ENCODE measurements at regions of chr12 and their contacts with region 1.

Region 1: DNA sequence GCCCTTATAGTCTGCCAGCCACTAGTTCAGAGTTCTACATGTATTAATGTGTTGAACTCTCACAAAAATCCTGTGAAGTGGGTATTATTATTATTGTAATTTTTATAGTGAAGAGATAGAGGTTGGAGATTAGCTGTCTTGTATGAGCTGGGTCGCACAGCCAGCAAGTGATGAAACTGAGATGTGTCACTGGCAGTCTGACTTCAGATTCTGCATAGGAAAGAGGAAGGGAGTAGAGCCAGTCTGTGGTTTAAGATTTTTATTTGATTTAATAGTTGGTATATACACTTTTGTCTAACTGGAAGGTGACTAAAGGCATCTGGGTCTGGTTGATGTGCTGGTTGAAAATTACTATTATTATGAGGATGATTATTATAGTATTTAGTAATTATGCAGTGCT is 5.8 kb upstream of the FRS2 start:
- DNase-seq: no peak
- ATAC-seq: no peak
- H3K4me3 Mint-ChIP-seq: no peak overlapping the region
- H3K27ac Mint-ChIP-seq: no peak overlapping the region
- H3K4me1 Mint-ChIP-seq: peaks cover 26% of the 10 kb centered on the region
- H3K27me3 Mint-ChIP-seq: no peaks in the 10 kb centered on the region
- CTCF ChIP-seq: no peak

Region 2: DNA sequence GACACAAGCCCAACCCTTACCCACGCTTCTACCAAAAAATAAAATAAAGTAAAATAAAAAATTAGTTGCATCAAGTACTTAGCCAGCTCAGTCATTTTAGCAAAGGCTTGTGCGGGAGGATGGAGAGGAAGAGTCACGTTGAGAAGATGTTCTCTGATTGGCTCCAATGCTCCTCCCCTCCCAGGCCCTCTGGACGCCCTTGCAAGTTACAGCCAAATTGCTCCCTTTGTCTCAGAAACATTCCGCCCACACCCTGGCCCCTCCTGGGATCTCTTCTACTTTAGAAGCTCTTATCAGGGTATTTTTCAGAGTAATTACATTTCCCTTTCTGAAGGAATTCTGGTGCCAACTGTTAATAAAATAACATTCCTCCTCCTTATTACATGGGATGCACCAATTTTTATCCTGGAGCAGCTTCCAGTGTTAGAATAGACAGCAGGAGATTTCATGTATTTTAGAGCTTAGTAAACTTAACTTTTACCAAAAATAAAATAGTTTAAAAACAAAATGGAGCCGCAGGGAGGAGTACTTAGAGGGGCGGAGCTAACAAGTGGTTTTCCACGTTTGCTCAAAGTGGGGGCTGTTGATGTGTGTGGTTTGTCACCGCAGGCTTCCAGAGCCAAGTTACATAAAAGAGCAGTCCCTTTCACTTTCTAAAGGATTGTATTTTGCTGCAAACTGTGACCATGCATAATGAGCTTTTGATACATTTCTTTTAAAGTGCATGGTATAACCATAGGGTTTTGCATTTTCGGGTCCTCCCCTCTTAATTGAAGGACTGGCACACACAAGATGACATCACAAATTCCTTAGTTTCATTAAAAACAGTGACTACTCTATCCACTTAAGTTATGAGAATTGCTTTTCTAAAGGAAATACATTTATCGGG is 925.5 kb before region 1 on chr12:
- CTCF ChIA-PET with region 1: no interaction called
- POLR2A ChIA-PET with region 1: no interaction called
- intact Hi-C with region 1: no loop called
- DNase-seq: no peak
- ATAC-seq: peak; percentile 37
- H3K4me3 Mint-ChIP-seq: no peak overlapping the region
- H3K27ac Mint-ChIP-seq: no peak overlapping the region
- H3K4me1 Mint-ChIP-seq: peaks cover 17% of the 10 kb centered on the region
- H3K27me3 Mint-ChIP-seq: no peaks in the 10 kb centered on the region
- CTCF ChIP-seq: no peak

Region 3: DNA sequence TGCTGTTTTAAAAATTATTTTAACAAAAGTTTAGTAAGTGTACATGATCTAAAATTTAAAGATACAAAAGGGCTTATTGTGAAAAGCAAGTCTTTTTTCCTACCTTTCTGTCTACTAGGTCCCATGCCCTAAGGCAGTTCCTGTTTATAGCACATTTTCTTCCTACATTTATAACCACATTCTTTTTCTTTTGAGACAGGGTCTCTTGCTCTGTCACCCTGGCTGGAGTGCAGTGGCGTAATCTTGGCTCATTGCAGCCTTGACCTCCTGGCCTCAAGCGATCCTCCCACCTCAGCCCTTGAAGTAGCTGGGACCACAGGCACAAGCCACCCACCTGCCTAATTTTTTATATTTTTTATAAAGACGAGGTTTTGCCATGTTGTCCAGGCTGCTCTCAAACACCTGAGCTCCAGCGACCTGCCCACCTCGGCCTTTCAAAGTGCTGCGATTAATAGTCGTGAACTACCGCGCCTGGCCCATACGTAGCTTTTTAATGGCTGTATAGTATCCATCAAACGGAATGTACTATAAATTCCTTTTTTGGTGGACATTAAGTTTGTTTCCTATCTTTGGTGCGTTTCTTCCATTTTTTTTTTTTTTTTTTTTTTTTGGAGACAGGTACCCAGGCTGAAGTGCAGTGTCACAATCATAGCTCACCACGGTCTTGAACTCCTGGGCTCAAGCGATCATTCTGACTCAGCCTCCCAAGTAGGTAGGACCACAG is 26.7 kb after region 1 on chr12:
- CTCF ChIA-PET with region 1: no interaction called
- POLR2A ChIA-PET with region 1: interaction called, 14 read pairs
- intact Hi-C with region 1: no loop called
- DNase-seq: no peak
- ATAC-seq: no peak
- H3K4me3 Mint-ChIP-seq: no peak overlapping the region
- H3K27ac Mint-ChIP-seq: no peak overlapping the region
- H3K4me1 Mint-ChIP-seq: peaks cover 16% of the 10 kb centered on the region
- H3K27me3 Mint-ChIP-seq: no peaks in the 10 kb centered on the region
- CTCF ChIP-seq: no peak

Measured in activated B cell treated with CpG ODN at 0.5 μM for 24 hours (primary cell).